ENCODE measurements at regions of chr15 and their contacts with region 1.

Region 1: DNA sequence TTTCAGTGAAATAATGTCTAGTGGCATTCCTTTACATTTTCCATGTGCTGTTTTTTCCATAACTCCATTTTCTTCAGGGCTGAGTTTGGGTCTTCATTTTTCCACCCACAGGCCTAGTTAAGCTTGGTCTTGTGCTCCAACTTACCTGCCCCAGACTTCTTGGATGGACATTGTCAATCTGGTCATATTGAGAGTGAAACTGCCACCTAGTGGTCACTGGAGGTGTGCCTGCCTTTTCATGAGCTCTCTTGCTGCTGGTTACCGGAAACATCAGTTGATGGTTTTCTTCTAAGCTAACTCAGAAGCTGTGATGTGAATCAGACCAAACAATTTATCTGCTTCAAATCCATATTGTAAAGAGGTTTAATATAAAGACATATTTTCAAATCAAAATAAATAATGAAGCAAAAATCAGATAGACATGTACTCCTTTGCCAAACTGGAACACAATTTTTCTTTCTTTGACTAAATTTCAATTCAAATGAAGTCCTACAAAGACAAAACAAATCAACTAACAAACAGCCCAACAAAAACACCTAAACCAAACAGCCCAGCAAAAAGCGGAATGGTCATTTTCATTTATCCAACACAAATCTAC is 135.1 kb upstream of the RASGRP1 start:
- DNase-seq: peak; percentile 16 to 83 (median 58)

Region 2: GRCh38 chr15:38440353-38441129 is 259.2 kb before region 1 on chr15:
- intact Hi-C with region 1: loop called (anchors 10 kb)
- DNase-seq: peak in 28 of 42 donors; percentile 13 to 80 (median 40)

Region 3: DNA sequence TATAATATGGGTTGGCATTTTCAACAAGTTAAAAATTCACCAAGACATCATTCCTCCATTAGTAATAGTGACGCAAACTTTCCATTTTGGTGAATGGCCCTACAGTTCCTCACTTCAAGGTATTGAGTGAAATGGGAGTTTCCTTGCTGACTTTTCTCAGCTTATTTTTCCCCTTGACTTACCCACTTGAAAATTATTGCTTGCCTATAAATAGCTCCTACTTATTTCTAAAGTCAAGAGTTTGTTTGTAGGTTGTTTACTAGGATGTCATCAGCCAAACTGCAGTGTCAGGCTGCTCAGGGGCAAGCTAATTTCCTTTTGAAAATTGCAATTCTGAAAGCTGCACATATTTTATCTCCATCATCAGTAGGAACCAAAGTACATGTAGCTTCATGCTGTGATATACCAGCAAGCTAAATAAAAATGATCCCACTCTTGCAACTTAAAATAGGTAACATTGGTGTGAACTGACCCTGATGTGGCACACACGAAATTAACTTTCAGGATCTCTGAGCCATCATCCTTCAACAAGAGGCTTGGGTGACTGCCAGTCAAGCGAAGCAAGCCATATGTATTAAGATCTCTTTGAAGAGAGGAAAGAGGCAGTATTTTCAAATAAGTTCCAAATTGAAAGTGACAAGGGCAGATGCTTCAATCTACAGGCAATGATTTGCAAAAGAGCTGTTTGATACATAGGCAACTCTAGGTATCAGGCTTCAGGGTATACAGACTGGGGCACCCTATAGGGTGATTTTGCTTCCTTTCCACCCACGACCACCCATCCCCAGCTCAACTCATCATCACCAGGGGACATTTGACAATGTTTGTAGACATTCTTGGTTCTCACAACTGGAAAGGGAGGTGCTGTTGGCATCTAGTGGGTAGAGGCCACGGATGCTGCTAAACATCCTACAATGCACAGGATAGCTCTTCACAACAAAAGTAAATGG is 68.3 kb before region 1 on chr15:
- intact Hi-C with region 1: no loop called
- DNase-seq: no peak

Region 4: DNA sequence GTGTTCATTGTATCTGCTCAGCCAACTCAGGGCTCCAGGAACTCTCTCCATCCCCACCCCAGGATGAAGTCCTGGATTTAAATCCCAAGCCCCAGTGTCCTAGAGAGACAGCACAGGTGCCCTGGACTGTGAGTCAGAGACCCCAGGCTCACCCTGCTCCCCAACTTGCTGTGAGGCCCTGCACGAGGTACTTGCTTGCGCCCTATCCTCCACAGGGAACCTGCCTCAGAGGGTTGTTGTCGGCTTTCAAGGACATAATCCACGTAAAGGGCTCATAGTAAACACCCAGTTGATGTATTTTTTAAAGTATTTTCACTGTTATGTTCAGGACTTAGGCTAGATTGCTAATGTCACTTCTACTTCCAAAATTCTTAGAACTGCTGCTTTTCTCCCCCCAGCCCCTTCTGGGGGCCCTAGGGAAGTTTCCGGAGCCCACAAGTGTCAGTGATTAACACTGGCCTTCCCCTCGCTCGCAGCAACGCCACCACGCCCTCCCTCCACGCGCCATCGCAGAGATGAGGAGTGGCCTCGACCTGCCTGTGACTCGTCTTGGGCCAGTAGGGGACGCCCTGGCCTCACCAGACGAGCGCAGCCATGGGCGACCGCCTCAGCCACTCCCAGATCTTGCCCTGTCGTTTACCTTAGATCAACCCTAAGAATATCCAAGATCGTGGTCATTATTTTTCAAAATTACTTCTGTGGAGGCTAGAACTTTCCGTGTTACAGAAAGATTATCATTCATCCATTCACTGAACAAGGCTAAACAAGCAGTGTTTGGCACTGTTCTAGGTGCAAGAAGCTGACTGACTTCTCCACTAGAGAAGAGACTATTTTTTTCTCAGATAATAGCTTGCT is 1345.2 kb after region 1 on chr15:
- intact Hi-C with region 1: no loop called
- DNase-seq: peak; percentile 76 to 93 (median 86)

Measured in head of caudate nucleus (tissue), 42 donors.